HCT116 (cell line): ENCODE measurements at regions of chr5 and their contacts with region 1.

Region 1: GRCh38 chr5:65624571-65625555 is at the starts of genes SHLD3 and TRAPPC13:
- DNase-seq: peak; percentile 85
- ATAC-seq: peak; percentile 76
- H3K4me3 ChIP-seq: peak within 1 kb of the TSS; percentile 78 to 79
- H3K27ac ChIP-seq: peak within 1 kb of the TSS; percentile 62
- H3K4me1 ChIP-seq: peaks cover 2 to 17% of the 10 kb centered on the region in 2 experiments; a peak in 2 of 4 replicates
- H3K27me3 ChIP-seq: no peaks in the 10 kb centered on the region
- CTCF ChIP-seq: no peak
- POLR2A ChIP-seq: no peak
- RAD21 ChIP-seq: no peak
- total RNA-seq, gene SHLD3: 2.8 TPM
- total RNA-seq, gene TRAPPC13: 18.2 TPM

Region 2: GRCh38 chr5:65276178-65276890 is 348.5 kb before region 1 on chr5:
- CTCF ChIA-PET with region 1: no interaction called
- POLR2A ChIA-PET with region 1: no interaction called
- RAD21 ChIA-PET with region 1: no interaction called
- intact Hi-C with region 1: no loop called
- DNase-seq: no peak
- ATAC-seq: no peak
- H3K4me3 ChIP-seq: no peak overlapping the region
- H3K27ac ChIP-seq: no peak overlapping the region
- H3K4me1 ChIP-seq: no peaks in the 10 kb centered on the region
- H3K27me3 ChIP-seq: no peaks in the 10 kb centered on the region
- CTCF ChIP-seq: no peak
- POLR2A ChIP-seq: no peak
- RAD21 ChIP-seq: no peak

Region 3: GRCh38 chr5:65506961-65507360 is 117.9 kb before region 1 on chr5:
- CTCF ChIA-PET with region 1: no interaction called
- POLR2A ChIA-PET with region 1: no interaction called
- RAD21 ChIA-PET with region 1: no interaction called
- intact Hi-C with region 1: no loop called
- DNase-seq: no peak
- ATAC-seq: no peak
- H3K4me3 ChIP-seq: no peak overlapping the region
- H3K27ac ChIP-seq: no peak overlapping the region
- H3K4me1 ChIP-seq: no peaks in the 10 kb centered on the region
- H3K27me3 ChIP-seq: no peaks in the 10 kb centered on the region
- CTCF ChIP-seq: no peak
- POLR2A ChIP-seq: no peak
- RAD21 ChIP-seq: no peak

Region 4: GRCh38 chr5:65562731-65563701 is 61.8 kb before region 1 on chr5 and contains the starts of genes CENPK and PPWD1:
- CTCF ChIA-PET with region 1: no interaction called
- POLR2A ChIA-PET with region 1: no interaction called
- RAD21 ChIA-PET with region 1: no interaction called
- intact Hi-C with region 1: loop called (anchors 2 kb)
- DNase-seq: peak; percentile 91
- ATAC-seq: peak; percentile 100
- H3K4me3 ChIP-seq: peak within 1 kb of the TSS; percentile 87 to 96
- H3K27ac ChIP-seq: peak within 1 kb of the TSS; percentile 68
- H3K4me1 ChIP-seq: peaks cover 12 to 14% of the 10 kb centered on the region in 2 experiments; a peak in 3 of 4 replicates
- H3K27me3 ChIP-seq: no peaks in the 10 kb centered on the region
- CTCF ChIP-seq: no peak
- POLR2A ChIP-seq: peak; percentile 72
- RAD21 ChIP-seq: no peak
- total RNA-seq, gene CENPK: 21.4 TPM
- total RNA-seq, gene PPWD1: 25.5 TPM

Region 5: GRCh38 chr5:66100851-66101250 is 476.0 kb after region 1 on chr5:
- CTCF ChIA-PET with region 1: no interaction called
- POLR2A ChIA-PET with region 1: no interaction called
- RAD21 ChIA-PET with region 1: no interaction called
- intact Hi-C with region 1: no loop called
- DNase-seq: no peak
- ATAC-seq: no peak
- H3K4me3 ChIP-seq: no peak overlapping the region
- H3K27ac ChIP-seq: no peak overlapping the region
- H3K4me1 ChIP-seq: no peaks in the 10 kb centered on the region
- H3K27me3 ChIP-seq: no peaks in the 10 kb centered on the region
- CTCF ChIP-seq: no peak
- POLR2A ChIP-seq: no peak
- RAD21 ChIP-seq: no peak